ENCODE measurements at regions of chr20 and their contacts with region 1.

Region 1: GRCh38 chr20:44080646-44081267 is 106.2 kb downstream of the JPH2 start:
- DNase-seq: peak in 1 of 2 donors; percentile 70
- ATAC-seq: peak; percentile 91
- H3K4me3 ChIP-seq: no peak overlapping the region
- H3K27ac ChIP-seq: no peak overlapping the region
- H3K4me1 ChIP-seq: no peaks in the 10 kb centered on the region
- H3K27me3 ChIP-seq: no peaks in the 10 kb centered on the region

Region 2: GRCh38 chr20:43537921-43538877 is 542.6 kb before region 1 on chr20:
- intact Hi-C with region 1: loop called in 1 of 2 experiments (anchors 5 kb)
- DNase-seq: peak; percentile 67 to 85
- ATAC-seq: peak; percentile 59
- H3K4me3 ChIP-seq: no peak overlapping the region
- H3K27ac ChIP-seq: no peak overlapping the region
- H3K4me1 ChIP-seq: no peaks in the 10 kb centered on the region
- H3K27me3 ChIP-seq: no peaks in the 10 kb centered on the region

Region 3: DNA sequence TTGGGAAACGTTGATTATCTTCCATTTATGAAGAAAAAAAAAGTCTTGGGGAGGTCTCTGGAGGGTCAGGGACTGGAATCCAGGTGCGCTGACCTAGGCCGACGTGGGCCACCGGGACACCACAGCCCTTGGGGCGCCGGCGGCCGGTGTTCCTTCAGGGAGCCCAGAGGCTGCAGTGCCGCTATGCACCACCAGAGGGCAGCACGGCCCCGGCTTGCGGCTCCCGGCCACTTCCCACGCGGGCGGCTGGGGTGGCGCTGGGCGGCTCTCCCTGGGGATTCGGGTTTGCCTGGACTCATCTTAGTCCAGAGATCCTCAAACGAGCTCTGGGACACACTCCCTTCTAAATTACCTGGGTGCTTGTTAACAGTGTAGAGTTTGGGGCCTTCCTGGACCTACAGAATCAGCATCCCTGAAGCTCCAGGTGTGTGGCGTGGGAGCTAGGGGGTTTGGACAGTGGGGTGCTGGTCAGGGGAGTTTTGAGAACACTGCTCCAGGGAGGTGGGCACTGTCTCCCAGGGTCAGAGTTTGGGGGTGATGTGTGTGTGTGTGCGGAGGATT is 330.9 kb before region 1 on chr20:
- intact Hi-C with region 1: loop called (anchors 1 to 2 kb)
- DNase-seq: peak; percentile 81 to 96
- ATAC-seq: peak; percentile 88
- H3K4me3 ChIP-seq: no peak overlapping the region
- H3K27ac ChIP-seq: no peak overlapping the region
- H3K4me1 ChIP-seq: no peaks in the 10 kb centered on the region
- H3K27me3 ChIP-seq: no peaks in the 10 kb centered on the region

Region 4: GRCh38 chr20:43767686-43768474 is 312.9 kb before region 1 on chr20:
- intact Hi-C with region 1: loop called in 1 of 2 experiments (anchors 5 kb)
- DNase-seq: no peak
- ATAC-seq: no peak
- H3K4me3 ChIP-seq: no peak overlapping the region
- H3K27ac ChIP-seq: no peak overlapping the region
- H3K4me1 ChIP-seq: peaks cover 2 to 4% of the 10 kb centered on the region in 2 donors
- H3K27me3 ChIP-seq: no peaks in the 10 kb centered on the region

Region 5: DNA sequence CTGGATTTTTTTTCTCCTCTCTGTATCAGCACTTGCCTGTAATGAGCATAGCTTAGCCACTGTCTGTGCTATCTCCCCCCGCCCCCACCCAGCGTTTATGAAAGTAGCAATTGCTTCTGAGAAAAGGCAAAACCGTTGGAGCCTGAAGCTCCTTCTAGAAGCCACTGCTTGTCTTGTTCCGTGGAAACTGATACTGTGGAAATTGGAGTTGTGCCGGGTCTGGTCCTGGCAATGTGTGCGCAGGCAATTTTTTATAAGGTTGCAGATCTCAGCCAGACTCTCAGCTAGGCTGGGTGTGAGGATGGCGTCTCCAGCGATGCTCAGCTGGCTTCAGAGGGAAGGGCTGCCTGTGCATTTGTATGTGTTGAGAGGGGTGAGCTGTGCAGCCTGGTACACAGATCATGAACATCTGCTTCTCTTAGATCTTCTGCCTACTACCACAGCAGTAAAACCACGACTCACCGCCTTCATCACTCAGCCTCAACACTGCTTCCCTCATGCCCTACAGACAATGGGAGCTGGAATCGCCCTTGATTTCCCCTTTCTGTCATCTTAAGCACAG is 281.5 kb before region 1 on chr20:
- intact Hi-C with region 1: no loop called
- DNase-seq: no peak
- ATAC-seq: no peak
- H3K4me3 ChIP-seq: no peak overlapping the region
- H3K27ac ChIP-seq: no peak overlapping the region
- H3K4me1 ChIP-seq: peaks cover 0 to 3% of the 10 kb centered on the region in 2 donors
- H3K27me3 ChIP-seq: no peaks in the 10 kb centered on the region

Region 6: GRCh38 chr20:43840382-43841070 is 240.2 kb before region 1 on chr20:
- intact Hi-C with region 1: loop called (anchors 2 to 10 kb)
- DNase-seq: no peak
- ATAC-seq: no peak
- H3K4me3 ChIP-seq: no peak overlapping the region
- H3K27ac ChIP-seq: no peak overlapping the region
- H3K4me1 ChIP-seq: no peaks in the 10 kb centered on the region
- H3K27me3 ChIP-seq: no peaks in the 10 kb centered on the region

Region 7: GRCh38 chr20:43914311-43915210 is 166.2 kb before region 1 on chr20 and contains the start of gene TOX2:
- intact Hi-C with region 1: loop called in 1 of 2 experiments (anchors 5 kb)
- DNase-seq: peak; percentile 65 to 83
- ATAC-seq: peak; percentile 47
- H3K4me3 ChIP-seq: peak within 1 kb of the TSS; percentile 38 to 83
- H3K27ac ChIP-seq: no peak within 1 kb of the TSS
- H3K4me1 ChIP-seq: no peaks in the 10 kb centered on the region
- H3K27me3 ChIP-seq: no peaks in the 10 kb centered on the region
- total RNA-seq, gene TOX2: 11.9 to 17.2 TPM

Region 8: GRCh38 chr20:43983359-43983758 is 97.4 kb before region 1 on chr20:
- intact Hi-C with region 1: no loop called
- DNase-seq: no peak
- ATAC-seq: no peak
- H3K4me3 ChIP-seq: no peak overlapping the region
- H3K27ac ChIP-seq: no peak overlapping the region
- H3K4me1 ChIP-seq: no peaks in the 10 kb centered on the region
- H3K27me3 ChIP-seq: no peaks in the 10 kb centered on the region

Region 9: DNA sequence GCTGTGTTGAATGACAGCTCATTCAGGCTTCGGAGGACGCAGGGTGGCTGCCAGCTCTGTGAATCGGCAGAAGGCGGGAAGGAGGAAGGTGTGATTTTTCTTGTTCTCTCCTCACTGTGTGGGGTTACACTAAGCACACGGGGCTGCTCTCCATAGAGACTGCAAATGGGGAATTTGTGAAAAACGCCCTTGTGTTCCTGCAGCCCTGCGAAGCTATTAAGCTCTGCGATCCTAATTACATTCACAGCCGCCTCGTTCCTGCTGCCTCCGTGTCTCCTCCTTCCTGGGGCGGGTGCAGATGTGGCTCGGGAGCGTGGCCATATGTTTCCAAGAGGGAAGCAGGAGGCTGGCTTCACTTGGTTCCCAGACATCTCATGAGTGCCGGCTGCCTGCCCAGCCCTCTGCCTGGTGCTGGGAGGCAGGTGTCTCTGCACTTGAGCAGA is 42.1 kb before region 1 on chr20:
- intact Hi-C with region 1: no loop called
- DNase-seq: no peak
- ATAC-seq: no peak
- H3K4me3 ChIP-seq: no peak overlapping the region
- H3K27ac ChIP-seq: no peak overlapping the region
- H3K4me1 ChIP-seq: no peaks in the 10 kb centered on the region
- H3K27me3 ChIP-seq: no peaks in the 10 kb centered on the region

Measured in aorta (tissue), 5 donors.